Aorta (tissue), 5 donors: ENCODE measurements at regions of chr5 and their contacts with region 1.

Region 1: GRCh38 chr5:96601811-96602244 is 60.3 kb upstream of the CAST start:
- DNase-seq: no peak
- ATAC-seq: peak; percentile 83
- H3K4me3 ChIP-seq: no peak overlapping the region
- H3K27ac ChIP-seq: no peak overlapping the region
- H3K4me1 ChIP-seq: no peaks in the 10 kb centered on the region
- H3K27me3 ChIP-seq: no peaks in the 10 kb centered on the region

Region 2: DNA sequence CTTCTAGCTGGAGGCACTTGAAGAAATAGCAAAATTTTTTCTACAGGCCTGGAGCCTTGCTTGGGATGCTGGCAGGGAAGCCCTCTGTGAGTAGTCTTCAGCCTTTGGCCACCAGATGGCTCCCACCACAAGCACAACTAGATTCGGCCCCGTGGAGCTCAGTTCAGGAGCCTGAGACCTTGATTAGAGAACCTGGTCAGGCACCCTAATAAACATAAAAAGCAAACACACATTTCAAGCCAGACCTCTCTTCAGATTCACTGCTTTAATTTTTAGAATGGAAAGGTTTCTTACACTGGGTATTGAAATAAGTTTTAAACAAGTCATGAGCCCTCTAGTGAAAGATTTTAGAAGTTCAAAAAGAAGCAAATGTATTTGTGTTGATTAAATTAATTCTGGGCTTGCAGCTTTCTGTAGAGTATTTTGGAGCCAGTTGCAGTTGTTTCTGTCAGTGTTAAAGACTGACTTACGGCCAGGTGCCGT is 820.7 kb before region 1 on chr5:
- intact Hi-C with region 1: loop called in 1 of 2 experiments (anchors 10 kb)
- DNase-seq: peak; percentile 86 to 88
- ATAC-seq: peak; percentile 96
- H3K4me3 ChIP-seq: no peak overlapping the region
- H3K27ac ChIP-seq: no peak overlapping the region
- H3K4me1 ChIP-seq: no peaks in the 10 kb centered on the region
- H3K27me3 ChIP-seq: no peaks in the 10 kb centered on the region

Region 3: DNA sequence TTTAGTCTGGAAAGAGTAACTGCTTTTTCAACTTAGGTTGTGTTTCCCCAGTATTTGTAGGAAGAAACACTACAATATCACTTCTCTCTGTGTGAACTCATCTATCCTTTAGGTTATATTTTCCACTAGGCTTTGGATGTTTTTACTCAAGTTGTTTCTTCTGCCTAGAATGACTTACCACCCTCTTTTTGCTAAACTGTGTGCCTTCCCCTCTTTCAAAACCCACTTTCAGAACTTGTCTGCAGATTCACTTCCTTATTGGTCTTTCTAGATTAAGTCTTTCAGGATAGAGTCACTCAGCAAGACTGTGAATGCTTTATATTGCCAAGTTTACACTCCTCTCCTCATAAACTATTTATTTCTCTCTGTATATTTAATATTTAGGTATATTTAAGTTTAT is 46.2 kb after region 1 on chr5:
- intact Hi-C with region 1: no loop called
- DNase-seq: no peak
- ATAC-seq: no peak
- H3K4me3 ChIP-seq: no peak overlapping the region
- H3K27ac ChIP-seq: no peak overlapping the region
- H3K4me1 ChIP-seq: no peaks in the 10 kb centered on the region
- H3K27me3 ChIP-seq: no peaks in the 10 kb centered on the region